Gastrocnemius medialis (tissue), 4 donors: ENCODE measurements at regions of chr9 and their contacts with region 1.

Region 1: DNA sequence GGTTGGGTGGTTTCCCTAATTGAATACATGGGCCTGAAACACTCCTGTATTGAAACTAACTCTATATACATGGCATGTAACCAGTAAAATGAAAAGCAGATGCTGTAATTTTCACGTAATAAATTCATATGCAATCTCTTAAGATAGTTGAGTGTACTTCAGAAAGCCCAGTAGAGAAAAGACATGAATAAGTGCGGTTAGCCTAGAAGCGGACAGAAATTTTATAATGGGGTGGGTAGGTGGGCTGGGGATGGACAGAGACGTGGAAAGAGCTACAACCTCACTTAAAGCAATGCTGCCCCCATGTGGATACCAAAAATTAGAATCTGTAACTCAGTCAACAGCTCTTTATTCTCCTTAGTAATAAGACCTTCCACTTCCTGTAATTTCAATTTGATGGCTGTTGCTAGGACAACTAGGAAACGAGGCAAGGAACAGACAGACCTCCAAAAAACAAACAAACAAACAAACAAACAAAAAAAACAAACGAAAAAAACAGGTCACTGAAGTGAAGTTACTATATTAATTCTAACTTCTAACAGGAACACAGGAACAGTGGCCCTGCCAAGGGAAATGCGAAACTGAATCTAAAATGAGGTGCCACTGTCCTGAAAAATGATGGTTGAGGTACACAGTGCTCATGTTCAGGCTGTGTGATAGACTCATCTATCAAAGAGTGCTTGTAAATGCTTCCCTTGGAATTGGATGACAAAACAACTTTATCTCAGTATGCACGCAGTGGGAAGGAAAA is 103.4 kb upstream of the GNA14 start:
- DNase-seq: no peak
- ATAC-seq: peak; percentile 39 to 68
- H3K4me3 ChIP-seq: no peak overlapping the region
- H3K27ac ChIP-seq: peak overlapping the region in 1 of 4 donors; percentile 10
- H3K4me1 ChIP-seq: peaks cover 0 to 3% of the 10 kb centered on the region in 2 donors
- H3K27me3 ChIP-seq: no peaks in the 10 kb centered on the region
- CTCF ChIP-seq: peak; percentile 35 to 58 (median 48)
- POLR2A ChIP-seq: no peak

Region 2: GRCh38 chr9:77433675-77434445 is 317.7 kb before region 1 on chr9:
- in situ Hi-C with region 1: loop called in 1 of 4 experiments (anchors 10 kb)
- intact Hi-C with region 1: loop called (anchors 2 kb)
- DNase-seq: peak in 1 of 2 donors; percentile 33
- ATAC-seq: peak; percentile 52 to 70
- H3K4me3 ChIP-seq: no peak overlapping the region
- H3K27ac ChIP-seq: no peak overlapping the region
- H3K4me1 ChIP-seq: no peaks in the 10 kb centered on the region
- H3K27me3 ChIP-seq: no peaks in the 10 kb centered on the region
- CTCF ChIP-seq: peak; percentile 66 to 90 (median 81)
- POLR2A ChIP-seq: no peak

Region 3: GRCh38 chr9:77648234-77649120 is 103.0 kb before region 1 on chr9 and contains the start of gene GNA14:
- in situ Hi-C with region 1: no loop called
- intact Hi-C with region 1: loop called (anchors 5 kb)
- DNase-seq: no peak
- ATAC-seq: peak; percentile 51 to 65
- H3K4me3 ChIP-seq: peak within 1 kb of the TSS; percentile 43 to 58 (median 55)
- H3K27ac ChIP-seq: peak within 1 kb of the TSS in 3 of 4 donors; percentile 18 to 29 (median 24)
- H3K4me1 ChIP-seq: peaks cover 5 to 8% of the 10 kb centered on the region in 2 donors
- H3K27me3 ChIP-seq: peaks cover 16 to 26% (median 21%) of the 10 kb centered on the region in 3 donors
- CTCF ChIP-seq: no peak
- POLR2A ChIP-seq: no peak
- total RNA-seq, gene GNA14: 0.20 to 0.56 (median 0.22) TPM in 3 of 4 donors, not detected in the other

Region 4: DNA sequence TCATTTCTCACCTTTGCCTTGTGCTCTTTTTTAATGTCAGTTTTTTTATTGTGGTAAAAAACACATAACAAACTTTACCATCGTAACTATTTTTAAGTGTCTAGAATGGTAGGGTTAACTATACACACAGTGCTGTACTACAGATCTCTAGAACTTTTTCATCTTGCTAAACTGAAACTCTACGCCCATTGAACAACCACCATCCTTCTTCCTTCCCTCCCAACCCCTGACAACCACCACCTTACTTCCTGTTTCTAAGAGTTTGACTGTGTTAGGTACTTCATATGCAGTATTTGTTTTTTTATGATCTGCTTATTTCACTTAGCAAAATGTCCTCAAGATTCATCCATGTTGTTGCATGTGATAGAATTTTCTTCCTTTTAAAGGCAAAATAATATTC is 600.3 kb after region 1 on chr9:
- in situ Hi-C with region 1: no loop called
- intact Hi-C with region 1: no loop called
- DNase-seq: no peak
- ATAC-seq: no peak
- H3K4me3 ChIP-seq: no peak overlapping the region
- H3K27ac ChIP-seq: no peak overlapping the region
- H3K4me1 ChIP-seq: no peaks in the 10 kb centered on the region
- H3K27me3 ChIP-seq: no peaks in the 10 kb centered on the region
- CTCF ChIP-seq: no peak
- POLR2A ChIP-seq: no peak